ENCODE measurements at regions of chr17 and their contacts with region 1.

Region 1: DNA sequence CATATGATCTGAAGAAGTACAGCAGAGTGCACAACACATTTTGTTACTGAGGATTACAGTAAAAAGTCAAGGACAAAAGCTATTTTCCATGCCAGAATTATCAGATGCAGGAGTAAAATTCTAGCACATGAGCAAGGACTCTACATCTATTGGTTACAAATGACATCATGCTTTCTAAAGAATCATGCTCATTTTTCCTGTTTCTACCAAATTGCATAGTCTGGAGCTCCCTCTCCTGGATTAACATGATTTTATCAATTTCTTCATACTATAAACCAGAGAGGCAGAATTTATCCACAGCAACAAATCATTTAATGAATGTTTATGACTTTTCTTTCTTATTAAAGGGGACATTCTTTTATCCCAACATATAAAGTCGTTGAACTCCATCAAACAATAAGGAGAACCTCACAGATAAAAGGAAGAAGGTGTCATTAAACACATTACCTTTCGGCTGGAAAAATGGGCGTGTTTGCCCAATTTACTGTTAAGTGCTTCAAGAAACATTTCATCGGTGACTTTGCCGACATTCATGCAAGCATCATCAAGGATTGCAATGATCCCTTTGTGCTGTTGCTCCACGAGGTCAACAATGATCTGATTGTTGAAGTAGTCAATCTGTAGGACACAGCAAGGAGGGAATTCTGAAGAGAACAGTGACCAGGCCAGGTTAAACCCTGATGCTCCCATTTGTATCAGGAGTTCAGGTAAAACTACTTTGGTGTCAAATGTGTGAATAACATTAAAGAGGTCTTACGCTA is 121.7 kb downstream of the MYO1D start:
- DNase-seq: peak; percentile 83

Region 2: DNA sequence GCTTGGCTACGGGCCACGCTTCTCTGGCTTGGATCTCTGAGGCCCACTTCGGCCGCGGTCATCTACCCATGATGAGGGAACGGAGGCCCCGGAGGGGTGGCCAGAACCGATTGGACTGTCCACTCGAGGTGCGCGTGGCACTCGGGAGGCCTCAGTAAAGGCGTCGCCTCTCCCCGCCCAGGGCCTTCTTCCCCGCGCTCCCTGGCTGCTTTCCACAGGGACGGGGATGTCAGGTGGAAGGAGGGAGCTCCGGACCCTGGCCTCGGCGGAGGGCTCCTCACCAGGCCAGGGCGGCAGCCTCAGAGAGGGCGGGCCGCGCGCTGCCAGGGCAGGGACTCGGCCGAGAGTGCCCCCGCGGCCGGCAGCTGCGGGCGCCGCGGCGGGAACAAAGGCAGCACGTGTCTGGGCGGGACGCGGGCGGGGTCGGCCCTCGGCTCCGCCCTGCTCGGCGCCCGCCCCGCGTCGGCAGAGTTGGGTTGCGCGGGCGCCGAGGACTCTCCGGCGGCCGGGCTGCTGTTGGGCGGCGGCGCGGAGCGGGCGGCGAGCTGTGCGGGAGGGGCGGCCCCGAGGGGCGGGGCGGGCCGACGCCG is 269.0 kb before region 1 on chr17:
- in situ Hi-C with region 1: loop called (anchors 25 kb)
- DNase-seq: peak; percentile 82

Region 3: GRCh38 chr17:32877164-32877764 is 122.0 kb after region 1 on chr17:
- in situ Hi-C with region 1: no loop called
- DNase-seq: peak; percentile 94

Measured in ACHN (cell line).